ENCODE measurements at regions of chr4 and their contacts with region 1.

Region 1: DNA sequence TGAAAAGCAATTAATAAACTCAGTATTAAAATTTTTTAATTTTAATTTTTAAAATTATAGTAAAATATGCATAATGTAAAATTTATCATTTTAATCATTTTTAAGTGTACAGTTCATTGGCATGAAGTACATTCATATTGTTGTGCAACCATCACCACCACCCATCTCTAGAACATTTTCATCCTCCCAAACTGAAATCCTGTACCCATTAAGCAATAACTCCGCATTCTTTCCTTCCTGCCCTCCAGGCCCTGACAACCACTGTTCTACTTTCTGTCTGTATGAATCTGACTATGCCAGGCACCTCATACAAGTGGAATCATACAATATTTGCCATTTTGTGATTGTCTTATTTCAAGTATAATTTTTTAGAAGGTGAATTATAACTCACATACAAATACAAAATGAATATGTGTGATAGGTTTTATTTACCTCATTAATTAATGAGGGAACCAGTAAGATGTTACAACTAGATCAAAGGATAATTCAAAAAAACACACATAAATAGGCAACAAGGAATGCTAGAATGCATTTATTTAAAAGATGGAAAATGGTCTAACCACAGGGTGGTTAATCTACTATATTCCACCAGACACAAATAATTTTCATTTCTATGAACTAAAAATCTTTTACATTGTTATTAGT is 13.1 kb upstream of the AFF1 start:
- DNase-seq: no peak
- H3K4me3 ChIP-seq: no peak overlapping the region
- H3K27ac ChIP-seq: no peak overlapping the region
- H3K27me3 ChIP-seq: no peaks in the 10 kb centered on the region
- CTCF ChIP-seq: no peak

Region 2: GRCh38 chr4:86934771-86935565 is 13.2 kb after region 1 on chr4 and contains the start of gene AFF1:
- CTCF ChIA-PET with region 1: interaction called, 33 read pairs
- POLR2A ChIA-PET with region 1: interaction called, 3 read pairs
- DNase-seq: no peak
- H3K4me3 ChIP-seq: peak within 1 kb of the TSS; percentile 86
- H3K27ac ChIP-seq: peak within 1 kb of the TSS; percentile 77
- H3K27me3 ChIP-seq: no peaks in the 10 kb centered on the region
- CTCF ChIP-seq: peak; percentile 46
- polyA plus RNA-seq, gene AFF1: 17.2 and 19.5 TPM in 2 replicates

Region 3: DNA sequence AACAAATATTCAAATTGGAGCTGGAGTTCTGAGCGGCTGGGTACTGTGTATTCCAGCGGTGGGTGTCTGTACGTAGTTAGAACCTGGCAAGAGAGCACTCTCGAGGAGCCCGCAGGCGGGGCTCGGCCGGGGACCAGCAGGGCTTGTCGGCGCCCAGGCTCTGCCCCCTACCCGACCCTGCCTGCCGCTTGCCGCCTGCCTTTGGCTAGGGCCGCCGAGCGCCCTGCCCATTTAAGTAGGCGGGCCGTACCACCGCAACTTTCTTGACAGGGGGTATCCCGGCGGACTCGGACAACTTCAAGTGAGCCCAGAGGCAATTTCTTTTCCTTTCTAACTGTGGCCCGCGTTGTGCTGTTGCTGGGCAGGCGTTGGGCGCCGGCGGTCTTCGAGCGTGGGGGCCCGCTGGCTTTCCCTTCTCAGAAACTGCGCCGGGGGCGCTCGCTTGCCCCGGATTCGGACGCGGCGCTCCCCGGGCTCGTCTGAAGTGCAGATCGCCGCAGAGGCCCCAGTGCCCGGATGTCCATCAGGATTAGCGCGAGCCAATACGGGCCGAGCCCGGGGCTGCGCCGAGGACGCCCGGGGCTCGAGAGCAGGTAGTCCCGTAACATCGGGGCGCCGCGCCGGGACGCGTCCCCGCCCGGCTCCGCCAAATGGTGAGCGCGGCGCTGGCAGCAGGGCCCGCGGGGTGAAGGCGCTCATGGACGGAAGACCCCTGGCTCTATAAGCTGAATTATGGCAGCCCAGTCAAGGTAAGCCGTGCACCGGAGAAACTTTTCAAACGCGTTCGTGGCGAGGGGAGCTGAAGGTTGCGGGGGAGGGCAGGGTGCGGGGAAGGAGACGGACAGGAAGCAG is 85.2 kb after region 1 on chr4:
- CTCF ChIA-PET with region 1: interaction called, 62 read pairs
- POLR2A ChIA-PET with region 1: interaction called, 24 read pairs
- DNase-seq: peak; percentile 87
- H3K4me3 ChIP-seq: peak overlapping the region; percentile 71
- H3K27ac ChIP-seq: peak overlapping the region; percentile 99
- H3K27me3 ChIP-seq: no peaks in the 10 kb centered on the region
- CTCF ChIP-seq: peak; percentile 53

Region 4: GRCh38 chr4:87093443-87094123 is 171.9 kb after region 1 on chr4:
- CTCF ChIA-PET with region 1: interaction called, 77 read pairs
- POLR2A ChIA-PET with region 1: interaction called, 11 read pairs
- DNase-seq: no peak
- H3K4me3 ChIP-seq: no peak overlapping the region
- H3K27ac ChIP-seq: no peak overlapping the region
- H3K27me3 ChIP-seq: no peaks in the 10 kb centered on the region
- CTCF ChIP-seq: peak; percentile 53

Region 5: DNA sequence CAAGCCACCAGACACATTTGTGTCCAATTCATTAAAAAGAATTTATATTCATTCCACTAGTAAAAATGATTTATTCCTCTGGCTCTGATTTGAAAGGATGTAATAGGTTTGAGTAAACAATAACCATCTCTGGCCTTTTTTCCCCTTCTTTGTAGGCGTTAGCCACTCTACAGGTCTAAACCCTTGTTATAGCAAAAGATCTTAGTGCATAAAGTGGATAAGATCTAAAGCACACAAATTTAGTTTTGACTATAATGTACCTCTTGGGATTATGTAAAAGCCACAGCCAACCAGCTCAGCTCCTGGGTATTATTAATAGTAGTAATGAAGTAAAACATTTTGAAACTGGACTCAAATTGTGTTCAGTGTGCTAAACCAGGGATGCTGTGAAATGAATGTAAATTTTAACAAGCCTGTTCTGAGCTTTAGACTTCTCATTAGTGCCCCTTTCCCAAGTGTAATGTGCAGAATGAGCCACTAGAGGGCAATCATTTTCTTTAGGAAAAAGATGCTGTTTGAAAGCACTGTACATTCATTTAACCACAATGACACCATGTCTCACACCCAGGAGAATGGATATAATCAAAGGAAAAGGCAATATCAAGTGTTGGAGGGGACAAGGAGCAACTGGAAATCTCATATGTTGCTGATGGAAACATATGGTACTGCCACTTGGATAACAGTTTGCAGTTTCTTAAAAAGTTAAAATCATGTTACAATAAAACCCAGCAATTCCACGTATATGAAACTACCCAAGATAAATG is 228.9 kb after region 1 on chr4:
- CTCF ChIA-PET with region 1: interaction called, 35 read pairs
- POLR2A ChIA-PET with region 1: no interaction called
- DNase-seq: peak; percentile 32
- H3K4me3 ChIP-seq: no peak overlapping the region
- H3K27ac ChIP-seq: no peak overlapping the region
- H3K27me3 ChIP-seq: no peaks in the 10 kb centered on the region
- CTCF ChIP-seq: peak; percentile 84